ENCODE measurements at regions of chr12 and their contacts with region 1.

Region 1: GRCh38 chr12:39103552-39104165 is 198.3 kb upstream of the CPNE8 start:
- DNase-seq: no peak
- H3K4me3 Mint-ChIP-seq: no peak overlapping the region
- H3K27ac Mint-ChIP-seq: no peak overlapping the region
- H3K4me1 Mint-ChIP-seq: no peaks in the 10 kb centered on the region
- H3K27me3 Mint-ChIP-seq: no peaks in the 10 kb centered on the region

Region 2: DNA sequence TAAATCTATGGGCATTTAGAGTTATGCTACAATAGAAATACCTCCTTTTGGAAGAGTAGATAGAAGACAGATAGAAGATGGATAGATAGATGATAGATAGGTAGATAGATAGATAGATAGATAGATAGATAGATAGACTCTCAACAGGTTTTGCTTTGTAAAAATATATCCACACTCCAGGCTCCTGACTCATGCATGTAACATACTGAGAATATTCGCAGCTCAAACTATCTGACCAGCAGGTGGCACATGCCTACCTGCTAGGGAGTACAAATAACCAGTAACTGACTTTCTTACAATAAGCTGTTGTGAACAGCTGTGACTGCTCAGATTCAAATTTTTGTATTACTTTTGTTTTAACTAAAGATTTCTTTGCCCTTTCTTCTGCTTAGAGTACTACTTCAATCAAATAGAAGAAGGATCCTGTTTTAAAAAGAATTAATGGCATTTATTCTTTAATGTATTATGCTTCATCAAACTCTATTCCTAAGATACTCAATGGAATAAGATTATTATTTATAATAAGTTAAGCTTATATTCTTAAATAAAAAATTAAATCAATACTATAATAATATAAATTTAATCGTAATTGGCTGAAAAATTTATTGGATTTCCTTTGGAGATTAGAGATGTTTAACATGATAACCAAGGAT is 182.5 kb before region 1 on chr12:
- CTCF ChIA-PET with region 1: interaction called, 12 read pairs
- POLR2A ChIA-PET with region 1: no interaction called
- DNase-seq: peak; percentile 30
- H3K4me3 Mint-ChIP-seq: no peak overlapping the region
- H3K27ac Mint-ChIP-seq: no peak overlapping the region
- H3K4me1 Mint-ChIP-seq: no peaks in the 10 kb centered on the region
- H3K27me3 Mint-ChIP-seq: no peaks in the 10 kb centered on the region

Region 3: GRCh38 chr12:39047539-39048262 is 56.0 kb before region 1 on chr12:
- CTCF ChIA-PET with region 1: no interaction called
- POLR2A ChIA-PET with region 1: no interaction called
- DNase-seq: no peak
- H3K4me3 Mint-ChIP-seq: no peak overlapping the region
- H3K27ac Mint-ChIP-seq: no peak overlapping the region
- H3K4me1 Mint-ChIP-seq: no peaks in the 10 kb centered on the region
- H3K27me3 Mint-ChIP-seq: no peaks in the 10 kb centered on the region

Region 4: GRCh38 chr12:39116867-39117266 is 13.2 kb after region 1 on chr12:
- CTCF ChIA-PET with region 1: no interaction called
- POLR2A ChIA-PET with region 1: no interaction called
- DNase-seq: no peak
- H3K4me3 Mint-ChIP-seq: no peak overlapping the region
- H3K27ac Mint-ChIP-seq: no peak overlapping the region
- H3K4me1 Mint-ChIP-seq: no peaks in the 10 kb centered on the region
- H3K27me3 Mint-ChIP-seq: no peaks in the 10 kb centered on the region